Left cardiac atrium (tissue), 4 donors: ENCODE measurements at regions of chr20 and their contacts with region 1.

Region 1: DNA sequence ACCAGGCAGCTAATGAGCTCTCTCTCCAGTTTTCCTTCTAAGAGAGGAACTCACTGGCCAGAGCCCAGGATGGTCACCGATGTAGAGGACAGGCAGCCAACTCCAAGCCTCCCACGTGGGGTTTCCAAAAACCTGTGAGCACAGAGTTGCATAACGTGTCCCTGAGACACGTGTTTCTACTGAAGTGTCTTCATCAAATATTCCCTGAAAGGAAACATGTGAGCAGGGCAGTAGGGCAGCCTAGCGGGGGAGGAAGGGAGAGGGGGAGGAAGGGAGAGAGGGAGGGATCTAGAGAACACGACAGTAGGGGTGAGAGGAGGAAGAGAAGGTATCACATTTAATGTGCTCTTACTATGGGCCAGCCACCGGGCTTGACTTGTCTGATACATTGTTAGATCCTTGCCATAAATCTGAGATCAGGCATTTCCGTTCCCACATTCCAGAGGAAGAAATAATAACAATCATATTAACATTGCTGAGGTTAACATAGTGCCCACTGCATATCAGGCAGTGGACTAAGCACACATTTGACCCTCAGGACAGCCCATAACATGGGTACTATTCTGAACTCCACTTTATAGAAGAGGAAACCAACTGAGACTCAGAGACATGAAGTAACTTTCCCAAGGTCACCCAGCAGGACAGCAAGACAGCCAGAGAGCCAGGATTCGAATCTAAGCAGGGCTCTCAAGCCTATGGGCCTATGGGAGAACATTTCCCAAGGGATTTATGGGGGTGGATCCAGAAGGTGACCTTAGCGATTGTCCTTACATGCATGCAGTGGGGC is 4.5 kb upstream of the SYS1 start:
- DNase-seq: peak; percentile 78
- ATAC-seq: peak; percentile 41 to 60

Region 2: DNA sequence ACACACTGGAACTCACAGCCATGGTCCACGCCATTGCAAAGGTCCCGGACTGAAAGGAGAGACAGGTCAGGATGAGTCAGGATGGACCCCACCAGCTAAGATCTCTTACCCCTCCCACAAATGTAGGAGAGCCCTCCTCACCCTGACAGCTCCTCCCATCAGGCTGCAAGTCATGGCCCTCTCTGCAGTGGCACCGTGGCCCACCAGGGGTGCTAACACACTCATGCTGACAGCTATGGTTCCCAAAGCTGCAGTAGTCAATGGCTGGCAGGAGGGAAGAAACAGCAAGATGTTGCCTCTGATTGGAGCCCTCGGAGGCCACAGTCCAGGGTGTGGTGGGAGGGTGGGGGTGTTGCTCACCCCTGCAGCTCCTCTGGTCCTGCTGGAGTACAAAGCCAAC is 57.5 kb before region 1 on chr20:
- intact Hi-C with region 1: no loop called
- DNase-seq: no peak
- ATAC-seq: no peak

Region 3: DNA sequence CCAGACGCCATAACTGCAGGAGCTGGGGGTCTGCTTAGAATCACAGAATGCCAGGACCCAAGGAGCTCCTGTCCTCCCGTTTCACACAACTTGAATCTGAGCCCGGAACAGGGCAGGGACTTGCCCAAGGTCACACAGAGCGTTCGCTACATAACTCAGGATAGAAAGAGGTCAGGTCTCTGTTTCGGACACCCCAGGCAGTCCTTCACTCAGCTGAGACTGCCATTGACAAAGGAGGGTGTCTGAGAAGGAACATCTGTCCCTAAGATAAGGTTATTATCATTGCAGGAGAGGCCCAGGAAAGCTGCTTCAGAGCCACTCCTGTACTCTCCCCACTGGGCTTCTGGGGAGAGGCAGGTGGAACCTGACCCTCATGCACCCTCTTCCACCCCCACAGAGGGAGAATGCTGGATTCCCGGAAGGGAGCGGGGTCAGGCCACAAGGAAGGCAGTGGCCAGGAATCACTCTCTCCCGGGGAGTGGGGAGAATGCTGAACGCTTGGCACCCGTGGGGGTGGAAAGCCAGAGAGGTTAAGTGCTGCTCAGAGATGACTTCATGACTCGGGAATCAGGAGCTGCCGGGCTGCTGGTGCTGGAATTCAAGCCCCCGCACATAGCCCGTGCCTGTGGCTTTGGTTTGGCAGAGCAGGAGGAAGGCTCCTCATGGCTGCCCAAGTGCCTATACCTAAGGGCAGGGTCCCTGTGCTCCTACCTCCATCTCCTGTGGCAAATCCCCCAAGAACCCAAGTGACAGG is 20.9 kb before region 1 on chr20:
- intact Hi-C with region 1: loop called in 1 of 2 experiments (anchors 2 kb)
- DNase-seq: peak; percentile 68
- ATAC-seq: peak; percentile 70 to 81

Region 4: DNA sequence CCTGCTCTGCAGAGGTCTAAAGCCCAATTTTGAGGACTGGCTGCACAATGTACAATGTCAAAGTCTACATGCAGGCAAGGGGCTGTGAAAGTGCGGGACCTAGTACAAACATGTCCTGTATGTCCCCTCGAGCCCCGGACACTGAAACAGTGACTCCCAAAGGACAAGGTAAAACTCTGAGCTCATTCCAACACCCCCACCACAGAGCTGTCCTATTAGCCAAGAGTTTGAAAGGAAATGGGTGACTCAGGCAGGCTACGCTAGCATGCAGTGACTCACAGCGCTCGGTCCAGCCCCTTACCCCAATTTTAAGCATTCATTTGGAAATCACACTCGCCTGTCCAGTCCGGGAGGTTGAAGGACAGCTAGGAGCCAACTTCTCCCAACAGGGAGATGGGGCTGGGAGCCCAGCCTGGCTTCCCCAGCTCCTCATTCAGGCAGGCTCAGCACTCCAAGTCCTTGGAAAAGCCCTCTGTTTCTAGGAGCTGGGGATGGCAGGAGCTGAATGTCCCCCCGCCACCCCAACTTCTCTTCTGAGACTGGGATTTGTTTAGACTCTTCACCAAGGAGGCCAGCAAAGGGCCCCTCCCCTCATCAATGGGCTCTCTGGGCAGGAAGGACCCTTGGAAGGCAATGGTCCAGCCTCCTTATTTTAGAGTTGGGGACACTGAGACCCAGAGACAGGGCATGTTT is 14.2 kb before region 1 on chr20:
- intact Hi-C with region 1: loop called in 1 of 2 experiments (anchors 2 kb)
- DNase-seq: peak; percentile 74
- ATAC-seq: peak; percentile 18 to 61

Region 5: GRCh38 chr20:45406259-45407066 is 48.0 kb after region 1 on chr20:
- intact Hi-C with region 1: loop called in 1 of 2 experiments (anchors 2 kb)
- DNase-seq: peak; percentile 85
- ATAC-seq: peak; percentile 74 to 83